Common myeloid progenitor, CD34-positive (primary cell): ENCODE measurements at regions of chr11 and their contacts with region 1.

Region 1: DNA sequence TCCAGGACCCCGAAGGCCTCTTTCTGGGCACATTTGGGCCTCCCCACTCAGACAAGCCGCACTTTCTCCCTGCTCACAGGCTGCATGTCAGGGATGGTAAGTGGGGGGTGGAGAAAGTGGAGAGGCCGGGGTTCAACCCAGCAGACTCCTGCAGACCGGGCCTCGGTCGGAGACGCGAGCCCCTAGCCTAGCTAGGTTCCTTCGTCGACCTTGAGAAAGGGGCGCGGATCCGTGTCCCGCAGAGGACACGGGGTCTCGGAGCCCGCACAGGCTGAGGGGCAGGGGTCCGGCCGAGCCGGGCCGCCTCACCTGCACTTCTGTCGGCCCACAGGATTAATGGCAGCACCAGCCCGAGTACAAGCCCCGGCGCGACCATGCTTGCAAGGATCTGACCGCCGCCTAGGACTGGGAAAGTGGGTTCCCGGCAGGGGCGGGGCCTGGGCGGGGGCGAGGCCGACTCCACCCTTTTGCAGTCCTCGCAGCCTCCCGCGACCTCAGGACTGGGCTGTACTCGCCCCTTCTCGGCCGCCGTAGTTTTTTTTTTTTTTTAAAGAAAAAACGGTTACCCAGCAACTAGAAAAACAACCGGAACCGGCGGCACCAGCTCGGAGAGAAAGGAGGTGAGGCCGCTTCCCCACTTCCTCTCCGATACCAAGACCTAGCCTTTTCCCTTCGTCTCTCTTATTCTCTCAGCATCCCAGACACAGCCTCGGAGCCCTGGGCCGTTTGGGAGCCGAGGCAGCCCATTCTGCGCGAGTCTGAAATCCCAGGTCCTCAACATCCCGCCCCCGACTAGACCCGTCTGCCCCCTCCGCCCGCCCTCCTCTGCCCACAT is at the starts of genes SIAE and SPA17:
- DNase-seq: peak; percentile 97 to 98 (median 97)
- H3K4me3 ChIP-seq: peak within 1 kb of the TSS; percentile 66 to 92 (median 82)
- H3K27ac ChIP-seq: peak within 1 kb of the TSS; percentile 73 to 91
- H3K4me1 ChIP-seq: peaks cover 28 to 53% (median 45%) of the 10 kb centered on the region in 4 experiments
- H3K27me3 ChIP-seq: no peaks in the 10 kb centered on the region

Region 2: DNA sequence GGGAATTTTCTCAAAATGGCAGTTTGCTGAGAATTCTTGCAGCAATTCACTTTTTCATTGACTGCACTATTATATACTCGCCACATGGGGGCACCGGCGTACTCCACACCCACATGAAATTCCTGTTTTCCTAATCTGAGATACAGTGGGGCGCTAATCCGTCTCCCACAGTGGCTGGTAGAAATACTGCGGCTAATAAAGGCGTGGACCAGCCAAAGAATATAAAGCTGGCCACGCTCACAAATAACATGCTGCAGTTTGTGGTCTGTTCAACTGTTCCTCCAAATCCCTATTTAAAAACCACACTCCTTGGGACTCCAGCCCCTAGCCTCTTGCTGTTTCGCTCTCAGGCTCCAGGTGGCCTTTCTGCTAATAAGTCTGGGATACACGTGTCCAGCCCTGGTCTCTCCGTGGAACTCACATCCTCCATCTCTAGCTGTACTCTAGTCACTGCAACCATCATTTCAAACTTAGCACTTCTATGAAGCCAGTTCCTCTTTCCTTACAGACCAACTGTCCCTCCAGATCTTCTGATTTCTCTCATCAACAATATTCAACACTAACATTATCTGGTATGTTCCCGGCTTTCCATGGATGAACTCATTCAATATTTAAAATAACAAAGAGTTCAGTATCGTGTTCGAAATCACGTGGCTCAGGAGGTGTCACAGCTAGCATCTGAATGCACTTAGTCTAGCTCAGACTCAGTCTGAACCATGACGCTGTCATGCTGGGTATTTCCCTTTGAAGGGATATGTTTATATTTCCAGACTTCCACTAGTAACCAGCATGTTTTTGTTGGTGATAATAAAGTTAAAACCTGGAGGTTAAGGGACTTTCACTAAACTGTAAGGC is 28.9 kb before region 1 on chr11:
- CTCF ChIA-PET with region 1: interaction called, 32 read pairs
- POLR2A ChIA-PET with region 1: no interaction called
- DNase-seq: peak; percentile 60 to 69 (median 61)
- H3K4me3 ChIP-seq: peak overlapping the region in 2 of 7 experiments; percentile 4 to 48
- H3K27ac ChIP-seq: no peak overlapping the region
- H3K4me1 ChIP-seq: peaks cover 0 to 29% (median 13%) of the 10 kb centered on the region in 4 experiments
- H3K27me3 ChIP-seq: no peaks in the 10 kb centered on the region

Region 3: GRCh38 chr11:124758317-124759203 is 85.0 kb after region 1 on chr11:
- CTCF ChIA-PET with region 1: interaction called, 139 read pairs
- POLR2A ChIA-PET with region 1: interaction called, 6 read pairs
- DNase-seq: peak; percentile 85 to 94 (median 91)
- H3K4me3 ChIP-seq: peak overlapping the region in 5 of 7 experiments; percentile 31 to 87 (median 69)
- H3K27ac ChIP-seq: no peak overlapping the region
- H3K4me1 ChIP-seq: peaks cover 1 to 61% (median 57%) of the 10 kb centered on the region in 4 experiments
- H3K27me3 ChIP-seq: no peaks in the 10 kb centered on the region

Region 4: GRCh38 chr11:124778281-124778680 is 104.7 kb after region 1 on chr11:
- CTCF ChIA-PET with region 1: interaction called, 14 read pairs
- POLR2A ChIA-PET with region 1: no interaction called
- DNase-seq: no peak
- H3K4me3 ChIP-seq: no peak overlapping the region
- H3K27ac ChIP-seq: no peak overlapping the region
- H3K4me1 ChIP-seq: peaks cover 0 to 5% (median 2%) of the 10 kb centered on the region in 4 experiments
- H3K27me3 ChIP-seq: peaks cover 0 to 2% (median 0%) of the 10 kb centered on the region in 5 experiments

Region 5: DNA sequence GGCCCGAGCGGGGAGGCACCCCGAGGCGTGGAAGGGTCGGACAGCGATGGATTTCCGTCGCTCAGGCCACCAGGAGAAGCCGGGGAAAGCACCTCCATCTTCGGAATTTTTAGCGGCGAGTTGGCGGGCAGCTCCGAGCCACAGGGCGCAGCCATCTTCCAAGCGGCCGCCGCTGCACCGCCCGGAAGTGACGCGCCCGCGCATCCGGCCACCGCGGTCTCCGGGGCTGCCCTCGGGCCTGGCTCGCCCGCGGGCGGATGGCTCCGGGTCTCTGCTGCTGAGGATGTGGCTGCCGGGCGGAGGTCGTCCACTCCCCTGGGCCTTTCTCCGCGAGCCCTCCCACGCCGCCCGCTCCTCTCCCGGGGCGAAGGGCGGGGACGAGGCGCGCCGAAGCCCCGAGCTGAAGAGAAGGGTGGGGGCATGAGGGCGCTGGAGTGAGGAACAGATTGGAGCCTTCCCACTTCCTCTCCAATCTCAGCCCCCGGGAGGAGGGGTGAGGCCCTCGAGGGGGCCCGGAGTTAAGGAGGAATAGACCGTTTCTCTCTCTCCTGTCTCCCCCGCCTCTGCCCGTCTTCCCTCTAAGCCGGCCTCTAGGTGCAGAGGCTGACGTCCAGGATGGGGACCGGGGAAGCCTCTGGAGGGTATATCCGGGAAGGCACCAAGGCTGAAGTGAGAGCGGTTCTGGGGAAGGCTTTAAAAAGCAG is 126.8 kb after region 1 on chr11 and contains the start of gene MSANTD2:
- CTCF ChIA-PET with region 1: interaction called, 56 read pairs
- POLR2A ChIA-PET with region 1: interaction called, 3 read pairs
- DNase-seq: peak; percentile 65 to 82 (median 74)
- H3K4me3 ChIP-seq: peak within 1 kb of the TSS; percentile 72 to 85 (median 81)
- H3K27ac ChIP-seq: peak within 1 kb of the TSS in 1 of 2 experiments; percentile 68
- H3K4me1 ChIP-seq: peaks cover 11 to 18% (median 15%) of the 10 kb centered on the region in 4 experiments
- H3K27me3 ChIP-seq: peaks cover 0 to 20% (median 16%) of the 10 kb centered on the region in 5 experiments

Region 6: GRCh38 chr11:124865921-124866583 is 192.5 kb after region 1 on chr11:
- CTCF ChIA-PET with region 1: interaction called, 16 read pairs
- POLR2A ChIA-PET with region 1: no interaction called
- DNase-seq: peak; percentile 42 to 68 (median 62)
- H3K4me3 ChIP-seq: peak overlapping the region in 4 of 7 experiments; percentile 23 to 61 (median 56)
- H3K27ac ChIP-seq: no peak overlapping the region
- H3K4me1 ChIP-seq: peaks cover 0 to 35% (median 20%) of the 10 kb centered on the region in 4 experiments
- H3K27me3 ChIP-seq: peaks cover 8 to 100% (median 82%) of the 10 kb centered on the region in 5 experiments